ENCODE measurements at regions of chr18 and their contacts with region 1.

Region 1: DNA sequence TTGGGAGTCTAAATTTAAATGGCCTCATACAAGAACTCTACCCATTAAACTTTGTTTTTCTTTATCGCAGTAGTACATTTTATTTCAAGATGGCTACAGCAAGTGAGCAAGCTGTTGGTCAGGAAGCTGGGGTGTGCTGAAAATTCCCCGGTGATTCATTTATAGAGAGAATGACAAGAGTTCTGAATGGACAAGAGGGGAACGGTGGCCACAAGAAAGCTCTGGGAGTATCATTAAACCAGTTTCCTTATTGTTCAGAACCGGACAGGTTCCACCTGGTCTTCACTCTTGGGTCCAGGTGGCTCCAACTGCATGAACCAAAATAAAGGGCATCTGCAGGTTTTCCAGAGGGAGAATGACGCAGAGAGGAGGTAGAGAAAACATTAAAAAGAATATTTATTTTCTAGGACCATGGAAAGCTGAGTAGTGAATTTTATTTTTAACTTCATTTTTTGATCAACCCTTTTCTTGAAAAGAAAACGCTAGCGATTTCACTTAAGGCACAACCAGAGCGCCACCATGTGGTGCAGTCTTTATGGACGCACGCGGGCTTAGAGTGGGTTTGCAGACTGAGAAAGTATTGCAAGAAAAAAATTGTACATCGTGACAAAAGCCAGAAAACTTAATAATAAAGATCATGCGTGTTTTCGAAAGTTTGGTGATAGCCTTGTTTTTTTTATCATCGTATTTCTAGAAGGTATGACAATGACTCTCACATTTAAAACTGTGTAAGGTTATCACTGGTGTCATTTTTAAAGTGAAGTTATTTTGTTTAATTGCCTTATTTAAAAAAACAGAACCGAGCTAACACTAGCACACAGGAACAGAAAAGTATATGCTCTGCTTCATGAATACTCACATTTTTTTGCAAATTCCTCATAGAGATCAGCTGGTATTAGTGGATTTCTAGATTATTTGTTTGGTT is 97.9 kb upstream of the NOL4 start:
- DNase-seq: peak; percentile 51 to 77
- ATAC-seq: no peak
- H3K4me3 ChIP-seq: no peak overlapping the region
- H3K27ac ChIP-seq: no peak overlapping the region
- H3K4me1 ChIP-seq: no peaks in the 10 kb centered on the region
- H3K27me3 ChIP-seq: no peaks in the 10 kb centered on the region

Region 2: GRCh38 chr18:33839441-33840211 is 483.0 kb before region 1 on chr18:
- intact Hi-C with region 1: loop called in 1 of 2 experiments (anchors 10 kb)
- DNase-seq: no peak
- ATAC-seq: no peak
- H3K4me3 ChIP-seq: no peak overlapping the region
- H3K27ac ChIP-seq: no peak overlapping the region
- H3K4me1 ChIP-seq: peaks cover 0 to 2% of the 10 kb centered on the region in 2 donors
- H3K27me3 ChIP-seq: no peaks in the 10 kb centered on the region

Region 3: DNA sequence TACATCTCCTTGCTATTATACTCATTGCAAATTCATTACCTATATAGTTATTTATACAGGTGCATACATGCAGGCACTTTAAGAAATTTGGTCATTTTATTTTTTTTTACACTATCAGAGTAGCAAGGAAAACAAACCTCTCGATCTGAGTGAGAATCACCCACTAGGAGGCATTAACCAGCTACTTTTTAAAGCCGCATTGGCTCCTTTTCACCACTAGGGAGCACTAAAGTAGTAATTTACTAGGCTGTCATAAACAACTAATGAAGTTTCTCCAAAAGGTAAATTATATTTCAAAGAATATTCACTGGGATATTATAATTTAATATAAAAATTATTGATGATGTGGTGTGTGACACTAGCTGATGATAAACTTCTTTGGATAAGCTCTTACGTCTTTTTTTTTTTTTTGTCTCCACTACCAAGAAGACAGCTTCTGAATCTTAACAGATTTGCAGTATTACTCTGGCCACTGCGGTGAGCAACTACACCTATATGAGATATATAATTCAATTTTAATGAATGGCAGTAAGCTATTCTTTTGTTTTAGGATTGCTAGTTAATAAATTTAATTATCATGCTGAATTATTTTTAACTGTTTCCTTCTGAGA is 199.8 kb before region 1 on chr18:
- intact Hi-C with region 1: loop called in 1 of 2 experiments (anchors 5 kb)
- DNase-seq: no peak
- ATAC-seq: peak; percentile 59
- H3K4me3 ChIP-seq: no peak overlapping the region
- H3K27ac ChIP-seq: no peak overlapping the region
- H3K4me1 ChIP-seq: no peaks in the 10 kb centered on the region
- H3K27me3 ChIP-seq: no peaks in the 10 kb centered on the region

Region 4: GRCh38 chr18:34261865-34262780 is 60.5 kb before region 1 on chr18:
- intact Hi-C with region 1: loop called in 1 of 2 experiments (anchors 10 kb)
- DNase-seq: no peak
- ATAC-seq: no peak
- H3K4me3 ChIP-seq: no peak overlapping the region
- H3K27ac ChIP-seq: no peak overlapping the region
- H3K4me1 ChIP-seq: no peaks in the 10 kb centered on the region
- H3K27me3 ChIP-seq: no peaks in the 10 kb centered on the region

Region 5: DNA sequence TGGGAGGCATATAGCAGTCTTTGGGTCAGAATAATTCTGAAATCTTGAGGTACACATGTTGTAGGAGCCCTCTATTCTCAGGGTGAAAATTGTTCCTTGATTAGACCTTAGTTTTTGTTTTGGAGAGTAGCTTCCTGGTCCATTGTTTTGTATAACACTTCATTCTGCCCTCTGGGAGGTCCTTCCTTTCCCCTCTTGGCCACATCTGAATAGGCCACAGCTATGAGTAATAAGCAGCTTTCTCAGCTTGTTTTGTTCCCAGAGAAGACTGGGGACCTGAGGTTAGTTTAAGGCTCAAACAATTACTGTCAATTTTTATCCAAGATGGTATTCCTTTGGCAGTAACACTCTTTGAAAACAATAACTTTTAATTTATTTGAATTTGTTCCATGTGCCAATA is 25.3 kb before region 1 on chr18:
- intact Hi-C with region 1: no loop called
- DNase-seq: no peak
- ATAC-seq: no peak
- H3K4me3 ChIP-seq: no peak overlapping the region
- H3K27ac ChIP-seq: no peak overlapping the region
- H3K4me1 ChIP-seq: no peaks in the 10 kb centered on the region
- H3K27me3 ChIP-seq: peaks cover 0 to 3% of the 10 kb centered on the region in 2 donors

Region 6: DNA sequence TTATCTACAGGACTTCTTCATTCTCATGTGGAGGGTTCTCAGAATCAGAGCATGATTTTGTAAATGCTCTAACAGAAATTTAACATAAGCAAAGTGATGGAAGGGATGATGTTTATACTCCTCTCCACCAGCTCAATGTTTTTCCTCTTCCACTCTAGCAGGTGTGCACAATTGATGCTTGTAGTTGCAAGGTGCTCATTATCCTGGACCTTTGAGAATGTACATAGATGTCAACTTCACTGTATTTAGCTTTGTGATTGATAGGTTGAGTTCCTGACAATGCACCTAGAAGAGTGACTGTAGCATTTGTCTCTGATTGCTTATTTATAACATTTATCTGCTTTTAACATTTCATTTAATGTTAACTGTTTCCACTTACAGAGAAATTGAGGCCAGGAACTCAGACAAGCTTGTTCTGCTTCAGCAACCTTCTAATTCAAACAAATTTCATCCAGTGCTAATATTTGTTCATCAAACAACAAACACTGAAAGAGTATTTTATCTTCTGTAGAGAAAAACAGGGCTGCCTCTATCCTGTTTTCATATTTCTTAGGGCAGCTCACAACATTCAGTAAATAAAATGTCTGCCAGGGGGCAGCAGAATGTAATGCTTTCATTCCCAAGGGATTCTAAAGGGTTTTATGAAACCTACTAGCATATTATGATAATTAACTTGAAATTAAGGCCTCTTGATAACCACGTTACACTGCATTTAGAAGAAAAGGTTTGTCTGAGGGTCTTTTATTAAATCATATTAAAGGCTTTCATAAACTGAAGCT is 29.9 kb after region 1 on chr18:
- intact Hi-C with region 1: no loop called
- DNase-seq: no peak
- ATAC-seq: no peak
- H3K4me3 ChIP-seq: no peak overlapping the region
- H3K27ac ChIP-seq: no peak overlapping the region
- H3K4me1 ChIP-seq: peaks cover 0 to 2% of the 10 kb centered on the region in 2 donors
- H3K27me3 ChIP-seq: no peaks in the 10 kb centered on the region

Measured in aorta (tissue), 5 donors.